ENCODE measurements at regions of chr17 and their contacts with region 1.

Region 1: DNA sequence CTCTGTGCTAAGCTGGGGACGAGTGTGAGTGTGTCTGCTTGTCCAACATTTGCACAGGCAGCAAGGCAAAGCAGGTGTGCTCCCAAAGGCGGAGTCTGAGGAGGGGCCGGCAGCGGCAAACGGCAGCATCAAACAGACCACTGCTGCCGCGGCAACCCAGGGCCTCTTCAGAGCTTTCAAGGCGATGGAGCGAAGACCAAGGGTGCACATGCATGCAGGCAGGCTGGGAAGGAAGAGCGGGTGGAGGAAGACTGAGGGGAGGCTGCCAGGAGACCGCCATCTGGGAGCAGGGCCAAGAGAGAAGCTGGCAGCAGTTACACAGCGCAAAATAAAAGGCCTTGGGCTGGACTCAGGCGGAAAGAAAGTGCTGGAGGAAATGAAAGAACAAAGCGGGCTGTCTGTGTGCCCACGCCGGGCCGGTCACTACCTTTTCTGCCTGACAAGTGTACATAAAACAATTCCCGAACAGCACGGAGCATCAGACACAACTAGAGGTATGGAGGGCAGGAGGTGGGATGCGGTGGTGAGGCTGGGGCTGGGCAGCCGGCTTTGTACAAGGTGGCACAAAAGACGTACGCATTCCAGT is 8.5 kb downstream of the TIMM22 start:
- DNase-seq: no peak

Region 2: DNA sequence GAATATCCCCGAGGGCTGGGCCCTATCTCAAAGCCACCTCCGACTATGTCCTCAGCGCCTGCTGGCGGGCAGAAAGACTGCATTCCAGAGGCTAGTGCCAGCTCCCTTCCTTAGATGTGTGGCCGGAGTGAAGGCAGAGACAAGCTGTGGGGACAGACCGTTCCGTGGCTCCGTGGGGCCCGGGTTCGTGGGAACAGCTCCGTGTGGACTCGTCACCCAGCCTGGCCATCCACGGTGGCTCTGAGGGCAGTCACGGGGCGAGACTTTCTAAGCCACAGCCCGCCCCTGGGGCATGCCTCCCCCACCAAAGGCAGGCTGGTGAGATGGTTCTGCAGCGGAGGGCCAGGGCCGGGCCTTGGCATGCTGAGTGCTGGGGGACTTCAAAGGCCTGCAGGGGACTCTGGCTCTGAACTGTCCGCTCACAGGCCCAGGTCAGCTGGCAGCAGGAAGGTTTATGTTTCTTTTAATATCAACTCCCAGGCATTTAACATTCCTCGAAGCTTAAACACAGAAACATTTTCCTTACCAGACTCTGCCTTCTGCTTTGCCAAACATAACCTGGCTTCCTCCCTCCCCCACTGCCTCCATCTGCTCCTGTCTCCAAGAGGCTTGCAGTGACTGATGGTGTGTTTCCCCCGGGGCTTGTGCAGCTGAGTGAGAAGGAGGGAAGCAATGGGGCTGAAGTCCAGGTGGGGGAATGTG is 41.9 kb after region 1 on chr17:
- intact Hi-C with region 1: loop called in 1 of 2 experiments (anchors 5 kb)
- DNase-seq: no peak

Region 3: GRCh38 chr17:1055751-1056645 is 50.5 kb after region 1 on chr17:
- intact Hi-C with region 1: loop called in 1 of 2 experiments (anchors 2 kb)
- DNase-seq: no peak

Measured in posterior vena cava (tissue), 2 donors.